ENCODE measurements at regions of chr17 and their contacts with region 1.

Region 1: DNA sequence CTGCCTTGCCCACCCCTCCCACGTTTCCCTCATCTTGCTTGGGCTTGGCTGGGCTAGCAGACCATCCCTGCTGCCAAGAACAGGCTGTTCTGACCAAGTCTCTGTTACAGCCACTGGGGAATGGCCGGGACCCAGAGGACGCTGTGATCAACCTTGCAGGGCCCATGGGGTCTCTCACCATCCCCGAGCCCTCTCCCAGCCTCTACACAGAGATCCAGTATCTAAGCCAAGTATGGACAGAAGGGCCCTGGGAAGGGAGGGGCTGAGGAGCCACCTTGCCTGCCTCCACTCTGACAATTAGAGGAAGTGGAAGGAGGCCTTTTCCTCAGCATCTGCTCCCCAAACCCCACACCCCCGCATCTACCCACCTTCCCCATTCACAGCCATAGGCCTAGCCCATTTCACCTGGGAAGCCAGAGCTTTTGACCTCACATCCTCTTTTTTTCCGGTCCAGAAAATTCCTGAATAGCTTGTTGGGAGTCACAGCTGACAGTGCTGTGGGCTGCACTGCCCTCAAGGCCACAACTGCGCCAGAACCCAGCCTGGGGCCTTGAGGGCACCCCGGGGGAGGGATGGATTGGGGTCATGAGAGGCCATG is 14.1 kb downstream of the CD300LG start:
- DNase-seq: no peak
- H3K4me3 Mint-ChIP-seq: no peak overlapping the region
- H3K27ac Mint-ChIP-seq: no peak overlapping the region
- H3K4me1 Mint-ChIP-seq: no peaks in the 10 kb centered on the region
- H3K27me3 Mint-ChIP-seq: peaks cover 6% of the 10 kb centered on the region

Region 2: GRCh38 chr17:43791589-43791988 is 69.5 kb before region 1 on chr17:
- CTCF ChIA-PET with region 1: interaction called, 4 read pairs
- POLR2A ChIA-PET with region 1: interaction called, 12 read pairs
- DNase-seq: no peak
- H3K4me3 Mint-ChIP-seq: no peak overlapping the region
- H3K27ac Mint-ChIP-seq: no peak overlapping the region
- H3K4me1 Mint-ChIP-seq: peaks cover 4% of the 10 kb centered on the region
- H3K27me3 Mint-ChIP-seq: peaks cover 30% of the 10 kb centered on the region